Adrenal gland (tissue), 19 donors: ENCODE measurements at regions of chr1 and their contacts with region 1.

Region 1: GRCh38 chr1:208024406-208024805 is 113.5 kb upstream of the CD34 start:
- DNase-seq: no peak
- H3K4me3 ChIP-seq: no peak overlapping the region
- H3K27ac ChIP-seq: no peak overlapping the region
- H3K4me1 ChIP-seq: peaks cover 0 to 4% of the 10 kb centered on the region in 2 donors
- H3K27me3 ChIP-seq: no peaks in the 10 kb centered on the region
- CTCF ChIP-seq: no peak
- POLR2A ChIP-seq: no peak

Region 2: DNA sequence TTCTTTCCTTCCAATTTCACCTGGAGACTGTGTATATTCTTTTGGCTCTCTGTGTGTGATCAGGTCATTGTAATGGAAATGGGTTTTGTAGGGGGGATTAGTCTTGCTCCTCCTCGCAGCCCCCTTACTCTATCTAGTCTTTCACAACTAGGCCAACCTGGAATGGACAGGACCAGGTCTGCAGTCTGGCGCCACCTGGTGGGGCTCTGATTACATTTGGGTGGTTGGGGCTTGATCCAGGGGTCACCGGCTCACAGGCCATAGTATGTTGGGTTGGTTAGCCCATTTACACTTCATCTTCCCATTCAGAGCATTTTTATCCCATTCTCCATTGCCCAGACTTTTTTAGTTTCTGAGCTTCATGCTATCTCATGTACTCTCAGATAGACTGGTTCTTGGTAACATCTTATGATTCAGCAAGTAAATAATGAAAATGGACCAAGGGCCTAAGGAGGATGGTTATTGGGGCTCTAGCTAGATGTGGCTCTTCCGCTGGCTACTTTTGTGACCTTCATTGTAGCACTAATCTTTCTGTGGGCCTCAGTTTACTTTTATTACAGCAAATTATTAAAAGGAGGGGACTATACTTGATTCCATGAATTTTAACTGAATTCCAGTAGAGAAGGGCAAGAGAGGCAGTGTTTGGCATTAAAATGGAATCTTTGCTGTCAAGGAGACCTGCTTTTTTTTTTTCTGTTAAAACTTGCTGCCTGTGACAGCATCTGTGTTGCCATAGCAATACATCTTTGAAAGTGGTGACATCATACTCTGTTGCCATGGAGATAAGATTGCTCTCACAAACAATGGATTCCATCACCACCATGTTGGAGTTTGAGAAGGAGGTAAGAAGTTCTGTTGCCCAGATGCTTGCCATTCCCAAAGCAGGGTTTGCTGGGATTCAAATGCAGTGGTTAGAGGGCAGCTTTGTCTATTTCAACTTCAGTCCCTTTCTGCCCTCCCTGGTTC is 69.6 kb after region 1 on chr1:
- intact Hi-C with region 1: loop called (anchors 5 kb)
- DNase-seq: peak; percentile 52 to 83 (median 75)
- H3K4me3 ChIP-seq: no peak overlapping the region
- H3K27ac ChIP-seq: no peak overlapping the region
- H3K4me1 ChIP-seq: peaks cover 0 to 9% of the 10 kb centered on the region in 2 donors
- H3K27me3 ChIP-seq: no peaks in the 10 kb centered on the region
- CTCF ChIP-seq: peak; percentile 47 to 77 (median 72)
- POLR2A ChIP-seq: no peak